Activated CD4-positive, alpha-beta T cell treated with anti-CD3 and anti-CD28 coated beads for 36 hours (primary cell): ENCODE measurements at regions of chr12 and their contacts with region 1.

Region 1: GRCh38 chr12:132828706-132829534 is at the start of gene GOLGA3:
- DNase-seq: peak; percentile 98
- ATAC-seq: peak; percentile 89
- H3K4me3 Mint-ChIP-seq: peak within 1 kb of the TSS; percentile 93
- H3K27ac Mint-ChIP-seq: peak within 1 kb of the TSS; percentile 100
- H3K4me1 Mint-ChIP-seq: peaks cover 44% of the 10 kb centered on the region
- H3K27me3 Mint-ChIP-seq: no peaks in the 10 kb centered on the region
- total RNA-seq, gene GOLGA3: 36.7 to 38.5 TPM

Region 2: GRCh38 chr12:132189378-132190011 is 639.4 kb before region 1 on chr12:
- CTCF ChIA-PET with region 1: no interaction called
- POLR2A ChIA-PET with region 1: no interaction called
- intact Hi-C with region 1: loop called in 1 of 2 experiments (anchors 2 kb)
- DNase-seq: peak; percentile 97
- ATAC-seq: peak; percentile 95
- H3K4me3 Mint-ChIP-seq: peak overlapping the region; percentile 78
- H3K27ac Mint-ChIP-seq: peak overlapping the region; percentile 79
- H3K4me1 Mint-ChIP-seq: peaks cover 28% of the 10 kb centered on the region
- H3K27me3 Mint-ChIP-seq: no peaks in the 10 kb centered on the region

Region 3: DNA sequence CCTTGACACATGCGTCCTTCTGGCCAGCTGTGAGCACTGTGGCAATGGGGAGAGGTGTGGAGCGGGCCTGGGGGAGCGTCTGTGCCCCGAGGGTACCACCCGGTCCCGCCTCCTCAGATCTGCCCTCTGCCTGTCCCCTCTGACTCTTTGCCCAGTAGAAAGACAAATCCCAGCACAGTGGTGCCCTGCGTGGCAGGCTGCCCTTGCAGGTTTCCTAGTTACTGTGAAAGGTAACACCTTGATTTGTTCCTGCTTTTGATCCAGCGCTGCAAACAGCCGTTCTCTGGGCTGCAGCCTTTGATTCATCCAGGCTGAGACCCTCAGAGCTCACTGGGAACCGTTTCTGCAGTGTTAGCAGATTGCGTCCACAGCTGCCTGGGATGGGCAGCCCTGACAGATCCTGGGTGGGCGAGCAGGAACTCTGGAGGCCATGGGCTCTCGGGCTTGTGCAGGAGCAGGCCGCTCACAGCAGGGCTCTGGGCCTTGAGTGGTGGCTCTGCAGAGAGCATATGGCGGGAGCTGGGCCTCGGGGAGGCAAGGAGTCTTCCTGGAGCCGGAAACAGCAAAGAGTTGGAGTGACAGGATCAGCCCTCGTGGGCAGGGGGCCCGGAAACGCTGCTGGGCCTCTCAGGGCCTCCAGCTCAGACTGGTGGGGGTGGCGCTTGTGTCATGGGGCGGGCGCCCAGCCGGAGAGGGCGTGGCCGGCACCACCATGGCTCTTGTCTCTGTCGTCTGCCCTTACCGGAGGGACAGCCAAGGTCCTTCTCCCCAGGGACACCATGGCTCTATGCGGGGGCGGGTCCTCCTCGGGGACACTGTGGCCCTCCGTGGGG is 322.4 kb before region 1 on chr12:
- CTCF ChIA-PET with region 1: no interaction called
- POLR2A ChIA-PET with region 1: no interaction called
- intact Hi-C with region 1: no loop called
- DNase-seq: peak; percentile 89
- ATAC-seq: peak; percentile 99
- H3K4me3 Mint-ChIP-seq: peak overlapping the region; percentile 33
- H3K27ac Mint-ChIP-seq: peak overlapping the region; percentile 76
- H3K4me1 Mint-ChIP-seq: peaks cover 48% of the 10 kb centered on the region
- H3K27me3 Mint-ChIP-seq: no peaks in the 10 kb centered on the region

Region 4: DNA sequence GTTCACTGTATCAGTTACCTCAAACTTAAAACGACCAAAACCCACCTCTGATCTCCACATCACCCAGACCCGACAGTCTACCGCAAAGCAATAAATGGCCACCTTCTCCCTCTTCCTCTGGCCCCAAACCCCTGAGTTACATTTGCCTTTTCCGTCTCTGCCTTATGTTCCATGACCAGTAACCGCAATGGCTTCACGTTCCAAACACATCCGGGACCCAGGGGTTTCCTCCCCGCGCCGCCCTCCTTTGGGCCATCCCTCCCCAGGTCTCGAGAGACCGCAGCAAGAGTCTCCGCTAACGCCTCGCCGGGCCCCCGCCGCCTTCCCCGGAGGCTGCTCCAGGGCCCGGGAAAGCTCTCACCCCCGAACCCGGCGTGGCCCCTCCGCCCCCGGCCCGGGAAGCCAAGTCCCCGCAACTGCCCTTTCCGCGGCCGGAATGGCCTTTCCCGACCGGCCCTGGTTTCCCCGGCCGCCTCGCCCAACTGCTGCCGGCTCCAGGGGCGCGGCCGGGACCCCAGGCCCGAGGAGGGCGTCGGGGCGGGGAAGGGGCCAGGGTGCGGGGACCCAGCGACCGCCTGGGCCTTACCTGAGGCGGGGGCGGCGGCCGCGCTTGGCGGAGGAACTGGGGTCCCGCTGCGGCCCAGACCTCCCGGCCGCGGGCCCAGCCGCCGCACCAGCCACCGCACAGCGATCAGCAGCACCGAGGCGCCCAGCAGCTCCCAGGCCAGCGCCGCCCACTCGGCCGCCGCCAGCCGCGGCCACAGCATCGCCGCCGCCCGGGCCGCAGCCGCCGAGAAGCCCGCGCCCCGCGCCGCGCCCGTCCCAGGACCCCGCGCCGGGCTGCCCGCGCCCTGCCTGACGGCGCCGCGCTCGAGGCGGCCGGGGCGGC is 67.6 kb before region 1 on chr12 and contains the start of gene ANKLE2:
- CTCF ChIA-PET with region 1: no interaction called
- POLR2A ChIA-PET with region 1: interaction called, 3 read pairs
- intact Hi-C with region 1: loop called (anchors 1 to 5 kb)
- DNase-seq: peak; percentile 84
- ATAC-seq: peak; percentile 41
- H3K4me3 Mint-ChIP-seq: peak within 1 kb of the TSS; percentile 90
- H3K27ac Mint-ChIP-seq: peak within 1 kb of the TSS; percentile 98
- H3K4me1 Mint-ChIP-seq: peaks cover 33% of the 10 kb centered on the region
- H3K27me3 Mint-ChIP-seq: no peaks in the 10 kb centered on the region
- total RNA-seq, gene ANKLE2: 110 to 111 TPM

Region 5: GRCh38 chr12:132812631-132813305 is 16.2 kb before region 1 on chr12:
- CTCF ChIA-PET with region 1: no interaction called
- POLR2A ChIA-PET with region 1: no interaction called
- intact Hi-C with region 1: no loop called
- DNase-seq: peak; percentile 37
- ATAC-seq: peak; percentile 26
- H3K4me3 Mint-ChIP-seq: no peak overlapping the region
- H3K27ac Mint-ChIP-seq: no peak overlapping the region
- H3K4me1 Mint-ChIP-seq: peaks cover 19% of the 10 kb centered on the region
- H3K27me3 Mint-ChIP-seq: no peaks in the 10 kb centered on the region

Region 6: DNA sequence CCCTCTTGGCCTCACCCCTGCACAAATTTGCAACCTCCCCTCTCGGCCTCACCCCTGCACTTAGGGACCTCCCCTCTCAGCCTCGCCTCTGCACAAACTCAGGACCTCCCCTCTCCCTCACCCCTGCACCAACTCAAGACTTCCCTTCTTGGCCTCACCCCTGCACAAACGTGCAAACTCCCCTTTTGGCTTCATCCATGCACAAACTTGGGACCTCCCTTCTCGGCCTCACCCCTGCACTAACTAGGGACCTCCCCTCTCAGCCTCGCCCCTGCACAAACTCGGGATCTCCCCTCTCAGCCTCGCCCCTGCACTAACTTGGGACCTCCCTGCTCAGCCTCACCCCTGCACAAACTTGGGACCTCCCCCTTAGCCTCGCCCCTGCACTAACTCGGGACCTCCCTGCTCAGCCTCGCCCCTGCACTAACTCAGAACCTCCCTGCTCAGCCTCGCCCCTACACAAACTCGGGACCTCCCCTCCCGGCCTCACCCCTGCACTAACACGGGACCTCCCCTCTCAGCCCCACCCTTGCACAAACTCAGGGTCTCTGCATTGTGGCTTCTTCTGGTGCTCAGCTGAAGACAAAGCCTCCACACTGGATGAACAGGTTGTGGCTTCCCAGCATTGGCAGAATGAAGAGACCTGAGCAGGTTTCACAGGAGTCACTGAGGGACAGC is 10.8 kb after region 1 on chr12:
- CTCF ChIA-PET with region 1: no interaction called
- POLR2A ChIA-PET with region 1: no interaction called
- intact Hi-C with region 1: no loop called
- DNase-seq: no peak
- ATAC-seq: no peak
- H3K4me3 Mint-ChIP-seq: no peak overlapping the region
- H3K27ac Mint-ChIP-seq: no peak overlapping the region
- H3K4me1 Mint-ChIP-seq: peaks cover 17% of the 10 kb centered on the region
- H3K27me3 Mint-ChIP-seq: no peaks in the 10 kb centered on the region

Region 7: GRCh38 chr12:132908145-132909044 is 79.5 kb after region 1 on chr12:
- CTCF ChIA-PET with region 1: interaction called, 6 read pairs
- POLR2A ChIA-PET with region 1: no interaction called
- intact Hi-C with region 1: loop called (anchors 1 to 2 kb)
- DNase-seq: peak; percentile 99
- ATAC-seq: peak; percentile 94
- H3K4me3 Mint-ChIP-seq: peak overlapping the region; percentile 84
- H3K27ac Mint-ChIP-seq: peak overlapping the region; percentile 88
- H3K4me1 Mint-ChIP-seq: peaks cover 17% of the 10 kb centered on the region
- H3K27me3 Mint-ChIP-seq: peaks cover 2% of the 10 kb centered on the region

Region 8: GRCh38 chr12:132921685-132922084 is 92.8 kb after region 1 on chr12:
- CTCF ChIA-PET with region 1: no interaction called
- POLR2A ChIA-PET with region 1: no interaction called
- intact Hi-C with region 1: no loop called
- DNase-seq: no peak
- ATAC-seq: no peak
- H3K4me3 Mint-ChIP-seq: no peak overlapping the region
- H3K27ac Mint-ChIP-seq: no peak overlapping the region
- H3K4me1 Mint-ChIP-seq: no peaks in the 10 kb centered on the region
- H3K27me3 Mint-ChIP-seq: no peaks in the 10 kb centered on the region

Region 9: GRCh38 chr12:133037207-133038005 is 208.5 kb after region 1 on chr12 and contains the start of gene ZNF84:
- CTCF ChIA-PET with region 1: no interaction called
- POLR2A ChIA-PET with region 1: no interaction called
- intact Hi-C with region 1: loop called in 1 of 2 experiments (anchors 1 kb)
- DNase-seq: peak; percentile 98
- ATAC-seq: peak; percentile 97
- H3K4me3 Mint-ChIP-seq: peak within 1 kb of the TSS; percentile 85
- H3K27ac Mint-ChIP-seq: peak within 1 kb of the TSS; percentile 94
- H3K4me1 Mint-ChIP-seq: peaks cover 10% of the 10 kb centered on the region
- H3K27me3 Mint-ChIP-seq: no peaks in the 10 kb centered on the region
- total RNA-seq, gene ZNF84: 21.5 to 24.1 TPM